Activated CD8-positive, alpha-beta T cell treated with anti-CD3 and anti-CD28 coated beads for 36 hours (primary cell): ENCODE measurements at regions of chr2 and their contacts with region 1.

Region 1: DNA sequence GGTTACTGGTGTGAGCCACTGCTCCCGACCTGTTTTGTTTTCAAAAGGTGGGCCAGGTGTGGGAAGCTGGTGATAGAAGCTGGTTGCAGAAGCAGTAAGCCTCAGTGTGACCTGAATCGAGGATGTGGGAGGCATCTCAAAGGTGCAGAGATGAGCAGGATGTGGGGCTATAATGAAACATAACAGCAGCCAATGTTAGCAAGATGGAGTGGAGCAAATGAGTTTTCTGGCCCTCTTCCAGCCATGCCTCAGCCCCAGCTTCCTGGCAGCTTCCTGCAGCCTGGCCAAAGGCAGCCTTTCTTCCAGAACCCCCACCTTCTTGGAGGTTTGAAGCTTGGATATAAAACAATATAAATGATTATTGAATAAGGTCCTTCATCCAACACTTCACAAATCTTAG is 184.8 kb downstream of the NCK2 start:
- DNase-seq: peak; percentile 78
- ATAC-seq: peak; percentile 69
- H3K4me3 Mint-ChIP-seq: no peak overlapping the region
- H3K27ac Mint-ChIP-seq: peak overlapping the region; percentile 83
- H3K4me1 Mint-ChIP-seq: peaks cover 62% of the 10 kb centered on the region
- H3K27me3 Mint-ChIP-seq: no peaks in the 10 kb centered on the region
- CTCF ChIP-seq: no peak

Region 2: DNA sequence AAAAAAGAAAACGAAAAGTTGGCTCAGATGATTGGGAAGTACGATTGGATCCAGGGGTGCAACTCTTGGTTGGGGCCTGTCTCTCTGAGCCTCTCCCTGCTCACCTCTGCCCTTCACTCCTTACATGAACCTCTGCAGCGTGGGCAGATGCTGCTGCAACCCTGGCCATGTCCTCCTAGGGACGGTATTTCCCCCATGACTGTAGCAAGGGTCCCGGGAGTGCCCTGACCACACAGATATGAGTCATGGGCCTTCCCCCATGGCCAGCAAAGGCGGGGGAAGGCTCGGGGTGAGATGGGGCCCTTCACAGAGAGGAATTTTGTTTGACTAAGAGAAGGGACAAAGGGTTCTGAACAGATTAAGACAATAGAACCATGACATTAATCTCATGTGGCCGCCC is 55.8 kb before region 1 on chr2:
- CTCF ChIA-PET with region 1: no interaction called
- POLR2A ChIA-PET with region 1: interaction called, 3 read pairs
- intact Hi-C with region 1: loop called (anchors 5 kb)
- DNase-seq: peak; percentile 92
- ATAC-seq: peak; percentile 90
- H3K4me3 Mint-ChIP-seq: peak overlapping the region; percentile 2
- H3K27ac Mint-ChIP-seq: peak overlapping the region; percentile 84
- H3K4me1 Mint-ChIP-seq: peaks cover 92% of the 10 kb centered on the region
- H3K27me3 Mint-ChIP-seq: no peaks in the 10 kb centered on the region
- CTCF ChIP-seq: no peak

Region 3: GRCh38 chr2:106053116-106053515 is 123.6 kb after region 1 on chr2:
- CTCF ChIA-PET with region 1: no interaction called
- POLR2A ChIA-PET with region 1: no interaction called
- intact Hi-C with region 1: loop called (anchors 10 kb)
- DNase-seq: peak; percentile 53
- ATAC-seq: peak; percentile 21
- H3K4me3 Mint-ChIP-seq: no peak overlapping the region
- H3K27ac Mint-ChIP-seq: peak overlapping the region; percentile 51
- H3K4me1 Mint-ChIP-seq: peaks cover 66% of the 10 kb centered on the region
- H3K27me3 Mint-ChIP-seq: no peaks in the 10 kb centered on the region
- CTCF ChIP-seq: no peak